CD8-positive, alpha-beta T cell (primary cell): ENCODE measurements at regions of chr18 and their contacts with region 1.

Region 1: GRCh38 chr18:30775629-30776028 is 266.9 kb downstream of the DSC3 start:
- DNase-seq: no peak
- ATAC-seq: no peak
- H3K4me3 ChIP-seq: no peak overlapping the region
- H3K4me3 Mint-ChIP-seq: no peak overlapping the region
- H3K27ac ChIP-seq: no peak overlapping the region
- H3K27ac Mint-ChIP-seq: no peak overlapping the region
- H3K4me1 ChIP-seq: no peaks in the 10 kb centered on the region
- H3K4me1 Mint-ChIP-seq: no peaks in the 10 kb centered on the region
- H3K27me3 ChIP-seq: no peaks in the 10 kb centered on the region
- H3K27me3 Mint-ChIP-seq: no peaks in the 10 kb centered on the region
- CTCF ChIP-seq: no peak

Region 2: GRCh38 chr18:30712383-30712782 is 63.2 kb before region 1 on chr18:
- CTCF ChIA-PET with region 1: no interaction called
- POLR2A ChIA-PET with region 1: no interaction called
- intact Hi-C with region 1: loop called in 1 of 2 experiments (anchors 10 kb)
- DNase-seq: no peak
- ATAC-seq: no peak
- H3K4me3 ChIP-seq: no peak overlapping the region
- H3K4me3 Mint-ChIP-seq: no peak overlapping the region
- H3K27ac ChIP-seq: no peak overlapping the region
- H3K27ac Mint-ChIP-seq: no peak overlapping the region
- H3K4me1 ChIP-seq: no peaks in the 10 kb centered on the region
- H3K4me1 Mint-ChIP-seq: no peaks in the 10 kb centered on the region
- H3K27me3 ChIP-seq: no peaks in the 10 kb centered on the region
- H3K27me3 Mint-ChIP-seq: no peaks in the 10 kb centered on the region
- CTCF ChIP-seq: no peak